ENCODE measurements at regions of chr1 and their contacts with region 1.

Region 1: GRCh38 chr1:11037740-11038182 is 9.3 kb downstream of the MASP2 start:
- DNase-seq: peak; percentile 89
- H3K4me3 Mint-ChIP-seq: no peak overlapping the region
- H3K27ac Mint-ChIP-seq: no peak overlapping the region
- H3K4me1 Mint-ChIP-seq: peaks cover 8% of the 10 kb centered on the region
- H3K27me3 Mint-ChIP-seq: peaks cover 3% of the 10 kb centered on the region

Region 2: GRCh38 chr1:10950316-10951172 is 87.2 kb before region 1 on chr1:
- CTCF ChIA-PET with region 1: no interaction called
- POLR2A ChIA-PET with region 1: no interaction called
- DNase-seq: no peak
- H3K4me3 Mint-ChIP-seq: no peak overlapping the region
- H3K27ac Mint-ChIP-seq: no peak overlapping the region
- H3K4me1 Mint-ChIP-seq: no peaks in the 10 kb centered on the region
- H3K27me3 Mint-ChIP-seq: peaks cover 12% of the 10 kb centered on the region

Region 3: GRCh38 chr1:10975567-10976326 is 62.0 kb before region 1 on chr1:
- CTCF ChIA-PET with region 1: no interaction called
- POLR2A ChIA-PET with region 1: no interaction called
- DNase-seq: no peak
- H3K4me3 Mint-ChIP-seq: no peak overlapping the region
- H3K27ac Mint-ChIP-seq: no peak overlapping the region
- H3K4me1 Mint-ChIP-seq: peaks cover 4% of the 10 kb centered on the region
- H3K27me3 Mint-ChIP-seq: peaks cover 19% of the 10 kb centered on the region

Region 4: DNA sequence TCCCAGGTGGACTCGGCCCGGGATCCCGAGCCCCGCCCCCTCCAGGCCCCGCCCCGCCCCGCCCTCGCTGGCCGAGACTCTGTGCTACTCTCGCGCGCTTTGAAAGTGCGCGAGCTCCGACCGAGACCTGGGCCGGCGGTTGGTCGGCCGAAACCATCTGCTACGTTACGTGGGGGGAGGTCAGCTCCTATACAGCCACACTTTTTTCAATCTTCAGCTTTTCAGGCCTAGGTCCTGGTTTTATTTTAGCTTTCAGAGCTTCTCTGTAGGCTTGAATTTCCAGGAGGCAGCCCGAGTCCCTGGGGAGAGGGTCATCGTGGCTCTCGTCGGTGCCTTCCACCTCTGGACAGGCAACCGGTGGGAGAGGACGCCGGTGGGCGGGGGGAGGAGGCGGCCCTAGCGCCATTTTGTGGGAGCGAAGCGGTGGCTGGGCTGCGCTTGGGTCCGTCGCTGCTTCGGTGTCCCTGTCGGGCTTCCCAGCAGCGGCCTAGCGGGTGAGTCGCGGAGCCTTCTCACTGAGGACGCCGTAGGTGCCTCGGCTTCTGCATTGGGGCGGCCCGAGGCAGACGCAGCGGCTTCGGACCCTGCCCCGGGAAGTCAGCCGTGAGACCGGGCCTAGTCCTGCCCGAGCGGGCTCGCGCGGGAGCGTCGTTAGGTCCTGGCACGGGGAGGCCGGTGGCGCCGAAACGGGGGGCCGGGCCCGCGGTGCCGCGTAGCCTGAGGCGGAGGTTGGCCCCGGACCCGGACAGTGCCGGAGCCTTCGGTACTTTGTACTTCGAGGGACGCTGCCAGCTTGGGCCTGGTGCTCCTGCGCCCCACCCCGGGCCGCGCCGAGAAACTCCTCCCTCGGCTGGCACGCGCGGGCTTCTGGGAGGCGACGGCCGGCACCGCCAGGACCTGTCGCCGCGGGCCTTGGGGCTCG is 25.2 kb before region 1 on chr1 and contains the start of gene TARDBP:
- CTCF ChIA-PET with region 1: interaction called, 12 read pairs
- POLR2A ChIA-PET with region 1: interaction called, 7 read pairs
- DNase-seq: peak; percentile 91
- H3K4me3 Mint-ChIP-seq: peak within 1 kb of the TSS; percentile 92
- H3K27ac Mint-ChIP-seq: peak within 1 kb of the TSS; percentile 85
- H3K4me1 Mint-ChIP-seq: peaks cover 30% of the 10 kb centered on the region
- H3K27me3 Mint-ChIP-seq: no peaks in the 10 kb centered on the region
- total RNA-seq, gene TARDBP: 159 to 174 TPM

Region 5: GRCh38 chr1:11053758-11054137 is 16.0 kb after region 1 on chr1:
- CTCF ChIA-PET with region 1: interaction called, 25 read pairs
- POLR2A ChIA-PET with region 1: interaction called, 15 read pairs
- DNase-seq: no peak
- H3K4me3 Mint-ChIP-seq: no peak overlapping the region
- H3K27ac Mint-ChIP-seq: no peak overlapping the region
- H3K4me1 Mint-ChIP-seq: peaks cover 24% of the 10 kb centered on the region
- H3K27me3 Mint-ChIP-seq: no peaks in the 10 kb centered on the region

Region 6: DNA sequence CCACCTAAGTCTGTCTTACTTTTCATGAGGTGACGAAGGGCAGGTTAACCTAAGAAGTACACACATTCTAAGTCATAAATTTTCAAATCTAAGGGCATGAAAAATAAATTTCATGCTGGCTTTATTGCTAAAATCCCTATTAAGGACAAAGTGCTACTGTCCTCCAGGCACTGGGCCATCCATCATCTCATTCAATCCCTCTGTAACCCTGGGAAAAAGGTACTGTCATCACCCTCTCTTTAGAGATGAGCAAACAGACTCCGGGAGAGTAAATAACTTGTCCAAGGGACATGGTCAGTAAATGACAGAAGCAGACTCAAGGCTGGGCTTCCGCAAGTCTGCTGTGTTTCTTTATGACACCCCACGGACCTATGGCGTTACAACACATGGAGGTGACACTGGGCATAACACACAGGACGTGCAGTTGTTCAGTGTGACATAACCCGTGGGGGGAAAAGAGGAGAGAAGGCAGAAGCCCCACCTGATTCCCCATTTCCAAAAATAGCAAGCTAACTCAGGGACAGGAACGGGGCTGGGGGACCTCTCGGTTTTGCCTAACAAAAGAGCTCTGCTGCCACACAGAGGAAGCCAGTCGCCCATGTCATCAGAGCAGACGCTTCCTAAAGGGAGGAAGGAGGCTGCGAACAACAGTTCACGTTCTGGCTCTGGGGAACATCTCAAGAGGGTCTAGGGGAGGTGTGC is 34.6 kb after region 1 on chr1:
- CTCF ChIA-PET with region 1: interaction called, 20 read pairs
- POLR2A ChIA-PET with region 1: no interaction called
- DNase-seq: no peak
- H3K4me3 Mint-ChIP-seq: no peak overlapping the region
- H3K27ac Mint-ChIP-seq: no peak overlapping the region
- H3K4me1 Mint-ChIP-seq: peaks cover 7% of the 10 kb centered on the region
- H3K27me3 Mint-ChIP-seq: no peaks in the 10 kb centered on the region

Region 7: DNA sequence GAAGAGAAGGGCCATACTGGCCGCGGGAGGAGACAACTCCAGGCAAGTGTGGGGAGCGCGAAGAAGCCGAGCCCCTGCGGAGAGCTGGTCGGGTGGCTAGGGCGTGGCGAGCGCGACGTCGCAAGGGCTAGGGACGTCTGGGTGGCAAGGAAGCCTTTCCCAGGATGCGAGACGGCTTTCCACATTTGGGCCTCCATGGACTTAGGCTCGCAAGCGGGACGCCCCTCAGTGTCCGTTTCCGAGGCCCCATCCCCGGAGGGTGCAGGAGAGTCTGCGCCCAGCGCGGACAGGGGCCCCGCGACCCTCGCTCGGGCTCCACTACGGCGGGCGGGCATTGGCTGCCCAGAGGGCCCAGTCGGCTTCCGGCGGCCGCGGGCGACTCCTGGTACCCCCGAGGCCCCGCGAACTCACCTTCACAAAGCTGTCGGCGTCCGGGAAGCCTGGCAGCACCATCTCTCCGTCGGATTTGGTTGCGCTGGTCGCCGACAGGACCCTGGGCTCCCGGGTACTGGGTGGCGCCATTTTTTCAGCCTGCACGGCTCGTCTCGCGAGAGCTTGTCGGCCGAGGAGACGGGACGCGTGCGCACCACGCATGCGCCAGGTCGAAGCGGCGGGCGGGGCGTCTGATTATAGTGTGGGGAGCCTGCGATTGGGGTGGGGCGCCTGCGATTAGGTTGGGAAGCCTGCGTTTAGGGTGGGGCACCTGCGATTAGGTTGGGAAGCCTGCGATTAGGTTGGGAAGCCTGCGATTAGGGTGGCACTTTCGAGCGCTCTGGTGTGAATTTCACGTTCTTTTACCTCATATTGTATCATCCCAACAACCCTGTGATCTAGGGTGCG is 61.8 kb after region 1 on chr1 and contains the start of gene EXOSC10:
- CTCF ChIA-PET with region 1: interaction called, 62 read pairs
- POLR2A ChIA-PET with region 1: interaction called, 11 read pairs
- DNase-seq: peak; percentile 96
- H3K4me3 Mint-ChIP-seq: peak within 1 kb of the TSS; percentile 92
- H3K27ac Mint-ChIP-seq: peak within 1 kb of the TSS; percentile 91
- H3K4me1 Mint-ChIP-seq: peaks cover 24% of the 10 kb centered on the region
- H3K27me3 Mint-ChIP-seq: no peaks in the 10 kb centered on the region
- total RNA-seq, gene EXOSC10: 65.8 to 67.6 TPM

Region 8: DNA sequence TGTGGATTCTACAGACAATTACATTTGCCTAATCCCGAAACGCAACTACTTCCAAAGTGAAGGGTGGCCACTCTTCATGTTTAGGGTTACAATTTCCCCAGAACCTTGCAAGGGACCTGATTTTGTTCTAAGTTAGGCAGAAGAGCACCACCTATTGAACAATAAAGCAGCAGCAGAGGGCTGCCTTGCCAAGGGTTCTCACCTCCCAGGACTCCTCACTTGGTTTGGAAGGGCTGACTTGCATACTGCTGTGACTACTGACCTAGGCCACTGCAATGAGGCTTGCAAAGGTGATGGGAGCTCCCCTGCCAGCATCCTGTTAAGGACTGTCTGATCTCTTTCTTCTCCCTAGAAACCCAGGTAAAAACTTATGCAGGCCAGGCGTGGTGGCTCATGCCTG is 210.4 kb after region 1 on chr1:
- CTCF ChIA-PET with region 1: interaction called, 31 read pairs
- POLR2A ChIA-PET with region 1: no interaction called
- DNase-seq: no peak
- H3K4me3 Mint-ChIP-seq: no peak overlapping the region
- H3K27ac Mint-ChIP-seq: no peak overlapping the region
- H3K4me1 Mint-ChIP-seq: peaks cover 4% of the 10 kb centered on the region
- H3K27me3 Mint-ChIP-seq: no peaks in the 10 kb centered on the region

Region 9: GRCh38 chr1:11645670-11646265 is 608.0 kb after region 1 on chr1:
- CTCF ChIA-PET with region 1: interaction called, 78 read pairs
- POLR2A ChIA-PET with region 1: interaction called, 5 read pairs
- DNase-seq: peak; percentile 85
- H3K4me3 Mint-ChIP-seq: no peak overlapping the region
- H3K27ac Mint-ChIP-seq: no peak overlapping the region
- H3K4me1 Mint-ChIP-seq: peaks cover 17% of the 10 kb centered on the region
- H3K27me3 Mint-ChIP-seq: peaks cover 7% of the 10 kb centered on the region

Measured in activated CD4-positive, alpha-beta memory T cell treated with anti-CD3 and anti-CD28 coated beads, Interleukin-2, amount 10 ng/mL, durations not matched to agents 7 days and 5 days (primary cell).